A673 (cell line): ENCODE measurements at regions of chr17 and their contacts with region 1.

Region 1: GRCh38 chr17:17356149-17356930 is 53.2 kb downstream of the NT5M start:
- DNase-seq: peak; percentile 87
- H3K4me3 ChIP-seq: no peak overlapping the region
- H3K27ac ChIP-seq: no peak overlapping the region
- H3K4me1 ChIP-seq: no peaks in the 10 kb centered on the region
- H3K27me3 ChIP-seq: no peaks in the 10 kb centered on the region
- CTCF ChIP-seq: peak; percentile 97

Region 2: DNA sequence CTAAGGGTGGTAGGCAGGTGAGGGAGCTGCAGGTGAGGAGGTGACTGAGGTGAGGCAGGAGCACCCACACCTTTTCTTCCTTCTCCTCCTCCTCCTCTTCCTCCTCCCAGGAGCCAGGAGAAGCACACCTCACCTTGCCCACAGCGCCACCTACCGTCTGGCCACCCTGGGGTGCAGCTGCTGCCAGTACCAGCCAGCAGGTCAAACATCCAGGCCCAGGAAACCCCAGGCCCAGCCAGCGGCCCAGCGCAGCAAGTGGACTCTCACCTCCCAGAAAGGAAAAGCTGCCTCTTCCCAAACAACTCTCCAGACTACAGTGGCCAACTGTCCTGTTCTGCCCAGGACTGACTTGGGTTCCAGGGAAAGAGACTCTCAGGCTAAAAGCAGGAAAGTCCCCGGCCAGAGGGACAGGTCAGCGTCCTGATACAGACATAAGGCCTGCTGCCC is 212.4 kb after region 1 on chr17:
- CTCF ChIA-PET with region 1: no interaction called
- POLR2A ChIA-PET with region 1: no interaction called
- intact Hi-C with region 1: loop called (anchors 2 kb)
- DNase-seq: peak; percentile 46
- H3K4me3 ChIP-seq: no peak overlapping the region
- H3K27ac ChIP-seq: no peak overlapping the region
- H3K4me1 ChIP-seq: no peaks in the 10 kb centered on the region
- H3K27me3 ChIP-seq: no peaks in the 10 kb centered on the region
- CTCF ChIP-seq: peak; percentile 87

Region 3: GRCh38 chr17:17641621-17642409 is 285.5 kb after region 1 on chr17:
- CTCF ChIA-PET with region 1: interaction called, 7 read pairs
- POLR2A ChIA-PET with region 1: no interaction called
- intact Hi-C with region 1: loop called (anchors 1 kb)
- DNase-seq: peak; percentile 87
- H3K4me3 ChIP-seq: no peak overlapping the region
- H3K27ac ChIP-seq: no peak overlapping the region
- H3K4me1 ChIP-seq: no peaks in the 10 kb centered on the region
- H3K27me3 ChIP-seq: no peaks in the 10 kb centered on the region
- CTCF ChIP-seq: peak; percentile 91

Region 4: DNA sequence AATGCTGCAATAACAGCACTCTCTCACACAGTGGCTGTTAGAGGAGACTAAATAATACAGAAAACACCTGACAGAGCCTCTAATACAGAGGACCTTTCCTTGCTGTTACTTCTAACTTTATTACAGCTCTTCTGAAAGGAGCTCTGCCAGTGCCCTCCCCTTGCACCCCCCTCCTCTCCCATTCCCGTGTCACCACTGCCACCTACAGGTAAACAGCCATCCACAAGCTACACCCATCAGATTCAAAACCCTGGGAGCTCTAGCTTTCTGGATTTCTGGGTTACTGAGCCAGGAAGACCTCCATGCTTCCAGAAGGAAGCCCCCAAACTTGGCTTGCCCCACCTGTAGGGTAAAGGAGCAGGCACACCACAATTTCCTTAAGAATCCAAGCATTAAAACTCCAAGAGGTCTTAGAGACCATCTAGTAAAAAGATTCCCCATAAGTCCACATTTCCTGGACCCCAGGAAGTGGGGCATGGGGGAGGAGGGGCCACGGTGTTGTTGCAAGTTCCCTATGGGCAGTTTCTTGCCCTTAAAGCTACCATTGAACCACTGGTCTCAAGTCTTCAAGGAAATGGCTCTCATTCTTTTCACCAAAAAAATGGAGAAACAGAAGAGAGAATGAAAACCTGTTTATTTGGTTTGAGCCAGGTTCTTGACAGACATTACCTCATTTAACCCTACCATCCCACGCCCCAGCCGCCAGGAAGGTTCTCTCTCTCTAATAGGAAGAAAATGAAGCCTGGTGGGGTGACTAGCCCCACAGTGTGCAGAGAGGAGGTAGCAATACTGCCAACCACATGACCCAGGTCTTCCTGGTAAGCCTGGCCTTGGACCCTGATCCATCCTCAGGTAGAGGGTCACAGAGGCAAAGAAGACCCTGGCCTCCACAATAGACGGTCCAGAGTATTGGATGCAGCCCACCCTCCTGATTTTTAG is 563.1 kb after region 1 on chr17:
- CTCF ChIA-PET with region 1: no interaction called
- POLR2A ChIA-PET with region 1: no interaction called
- intact Hi-C with region 1: loop called (anchors 10 kb)
- DNase-seq: peak; percentile 91
- H3K4me3 ChIP-seq: no peak overlapping the region
- H3K27ac ChIP-seq: peak overlapping the region; percentile 14
- H3K4me1 ChIP-seq: peaks cover 33% of the 10 kb centered on the region
- H3K27me3 ChIP-seq: no peaks in the 10 kb centered on the region
- CTCF ChIP-seq: peak; percentile 95

Region 5: DNA sequence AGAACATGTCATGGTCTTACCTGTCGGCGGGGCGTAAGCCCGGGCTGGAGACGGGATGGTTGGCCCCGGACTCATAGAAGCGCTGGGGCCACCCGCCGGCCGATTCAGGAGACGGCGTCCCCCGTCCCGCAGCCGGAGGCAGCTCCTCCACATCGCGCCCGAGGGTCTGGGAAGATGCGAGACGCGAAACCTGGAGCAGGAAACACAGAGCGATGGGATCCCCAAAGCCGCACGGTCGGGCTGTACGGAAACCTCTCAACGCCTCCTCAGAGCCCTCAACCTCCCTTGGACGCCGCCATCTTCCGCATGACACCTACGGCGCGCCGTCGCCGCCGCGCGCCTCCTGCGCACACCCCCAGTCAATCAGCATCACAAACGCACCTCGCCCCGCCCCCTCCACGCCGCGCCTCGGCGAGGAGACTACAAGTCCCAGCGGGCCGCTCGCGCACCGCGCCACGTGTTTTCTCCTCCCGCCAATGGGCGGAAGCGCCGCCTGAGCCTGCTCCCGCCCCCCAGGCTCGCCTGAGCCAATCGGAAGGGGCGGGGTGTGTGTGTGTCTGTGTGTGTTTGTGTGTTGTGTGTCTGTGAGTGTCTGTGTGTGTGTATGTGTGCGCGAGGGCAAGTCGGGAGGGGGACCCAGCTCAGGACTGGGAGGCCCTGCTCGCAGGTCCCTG is 682.7 kb after region 1 on chr17 and contains the starts of genes ATPAF2 and GID4:
- CTCF ChIA-PET with region 1: no interaction called
- POLR2A ChIA-PET with region 1: no interaction called
- intact Hi-C with region 1: loop called (anchors 5 kb)
- DNase-seq: peak; percentile 100
- H3K4me3 ChIP-seq: peak within 1 kb of the TSS; percentile 80
- H3K27ac ChIP-seq: peak within 1 kb of the TSS; percentile 80
- H3K4me1 ChIP-seq: no peaks in the 10 kb centered on the region
- H3K27me3 ChIP-seq: no peaks in the 10 kb centered on the region
- CTCF ChIP-seq: no peak
- total RNA-seq, gene ATPAF2: 30.5 and 33.7 TPM in 2 replicates
- total RNA-seq, gene GID4: 14.0 and 16.5 TPM in 2 replicates